ENCODE measurements at regions of chr13 and their contacts with region 1.

Region 1: DNA sequence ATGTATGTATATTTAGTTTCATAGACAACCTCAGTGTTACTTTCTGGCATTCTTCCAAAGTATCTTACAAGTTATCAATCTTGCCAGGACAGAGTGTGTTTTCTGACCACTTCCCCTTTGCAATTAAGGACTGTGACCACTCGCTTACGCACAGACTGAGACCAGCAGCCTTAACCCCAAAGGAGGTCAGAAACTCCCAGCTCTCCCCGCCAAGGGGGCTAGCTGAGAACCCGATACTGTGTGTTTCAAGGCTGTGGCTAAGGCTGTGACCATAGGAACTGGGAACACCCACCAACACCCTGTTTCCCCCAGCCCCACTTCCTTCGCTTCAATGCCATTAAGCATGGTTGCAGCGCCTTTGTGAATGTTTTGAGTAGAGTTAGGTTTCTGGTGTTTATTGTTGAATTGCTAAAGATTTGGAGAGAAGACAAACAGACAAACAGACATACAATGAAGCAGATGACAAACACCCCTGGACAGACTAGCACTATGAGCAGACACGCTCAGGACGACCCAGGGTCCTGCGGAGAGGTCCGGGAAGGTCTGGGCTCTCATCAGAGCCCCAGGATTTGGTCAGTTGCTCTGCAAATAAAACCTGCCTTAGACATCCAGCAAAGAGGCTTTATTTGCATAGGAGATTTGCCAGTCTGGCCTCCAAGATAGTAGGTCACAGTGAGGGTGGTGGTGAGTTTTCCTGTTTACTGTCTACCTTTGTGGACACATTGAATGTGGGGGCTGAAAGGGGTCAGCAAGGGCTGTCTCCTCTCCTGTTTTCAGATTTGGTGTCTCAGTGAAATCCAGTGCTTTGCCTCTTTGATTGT is 25.0 kb upstream of the TNFSF11 start:
- DNase-seq: peak; percentile 98
- ATAC-seq: peak; percentile 97
- H3K4me3 ChIP-seq: peak overlapping the region; percentile 33
- H3K27ac ChIP-seq: peak overlapping the region; percentile 66
- H3K4me1 ChIP-seq: peaks cover 27% of the 10 kb centered on the region
- H3K27me3 ChIP-seq: no peaks in the 10 kb centered on the region
- CTCF ChIP-seq: no peak
- EP300 ChIP-seq: peak; percentile 99
- POLR2A ChIP-seq: 0 out of 2 replicates have a peak, but pooled peaks have one; percentile 19
- RAD21 ChIP-seq: peak; percentile 35; the same call in 1 of the 2 replicates

Region 2: DNA sequence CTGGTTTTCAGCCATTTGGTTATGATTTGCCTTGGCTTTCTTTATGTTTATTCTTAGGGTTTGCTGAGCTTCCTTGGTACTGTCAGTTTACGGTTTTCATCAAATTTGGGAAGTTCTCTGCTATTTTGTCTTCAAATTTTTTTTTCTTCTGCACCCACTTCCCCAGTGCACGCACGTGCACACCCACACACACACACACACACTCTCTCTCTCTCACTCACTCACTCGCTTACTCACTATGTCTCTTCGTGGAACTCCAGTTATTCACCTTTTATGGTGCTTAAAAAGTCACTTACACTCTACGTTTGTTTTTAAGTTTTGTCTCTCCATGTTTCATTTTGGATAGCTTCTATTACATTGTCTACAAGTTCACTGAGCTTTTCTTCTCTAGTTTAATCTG is 269.9 kb before region 1 on chr13:
- CTCF ChIA-PET with region 1: no interaction called
- POLR2A ChIA-PET with region 1: no interaction called
- RAD21 ChIA-PET with region 1: no interaction called
- SMC1A ChIA-PET with region 1: no interaction called
- in situ Hi-C with region 1: no loop called
- intact Hi-C with region 1: no loop called
- DNase-seq: no peak
- ATAC-seq: peak; percentile 6; the same call in 1 of the 3 replicates
- H3K4me3 ChIP-seq: peak overlapping the region; percentile 46; the same call in 1 of the 2 replicates
- H3K27ac ChIP-seq: peak overlapping the region; percentile 54
- H3K4me1 ChIP-seq: peaks cover 26% of the 10 kb centered on the region
- H3K27me3 ChIP-seq: no peaks in the 10 kb centered on the region
- CTCF ChIP-seq: no peak
- EP300 ChIP-seq: no peak
- POLR2A ChIP-seq: no peak
- RAD21 ChIP-seq: no peak

Region 3: DNA sequence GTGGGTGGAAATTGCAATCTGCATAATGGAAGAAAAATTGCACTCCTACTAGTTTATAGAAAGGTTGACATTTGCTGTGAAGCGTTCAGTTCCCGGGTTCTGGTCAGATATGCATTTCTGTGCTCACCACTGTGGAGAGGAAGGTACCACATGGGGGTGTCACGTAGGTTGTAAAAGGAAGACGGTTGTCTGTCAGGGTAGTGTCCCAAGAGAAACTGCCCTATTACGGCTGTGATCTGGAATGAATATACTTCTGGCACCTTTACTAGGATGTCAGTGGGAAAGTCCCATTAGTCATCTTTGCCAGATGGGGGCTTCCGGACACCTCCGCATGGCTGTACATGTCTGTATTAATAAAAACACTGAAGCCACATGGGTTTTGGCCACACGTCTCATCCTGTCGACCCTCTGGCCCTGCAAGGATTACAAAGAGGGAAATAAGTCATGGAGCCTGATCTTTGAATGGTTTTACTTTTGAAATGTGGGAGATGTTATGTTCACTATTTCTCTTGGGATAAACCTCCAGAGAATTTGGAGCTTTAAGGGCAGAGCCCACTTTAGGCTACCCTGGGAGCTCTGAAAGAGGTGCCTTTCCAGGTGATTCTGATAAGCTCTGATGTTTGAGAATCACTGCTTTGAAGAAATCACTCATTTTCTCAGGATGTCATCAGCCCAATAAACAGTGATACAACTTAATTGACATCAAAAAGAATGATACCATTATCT is 143.1 kb before region 1 on chr13:
- CTCF ChIA-PET with region 1: interaction called, 3 read pairs
- POLR2A ChIA-PET with region 1: no interaction called
- RAD21 ChIA-PET with region 1: interaction called, 6 read pairs
- SMC1A ChIA-PET with region 1: interaction called, 3 read pairs
- in situ Hi-C with region 1: no loop called
- intact Hi-C with region 1: loop called (anchors 1 kb)
- DNase-seq: peak; percentile 97
- ATAC-seq: peak; percentile 90
- H3K4me3 ChIP-seq: peak overlapping the region; percentile 31; the same call in 1 of the 2 replicates
- H3K27ac ChIP-seq: peak overlapping the region; percentile 98
- H3K4me1 ChIP-seq: peaks cover 54% of the 10 kb centered on the region
- H3K27me3 ChIP-seq: no peaks in the 10 kb centered on the region
- CTCF ChIP-seq: 0 out of 6 replicates have a peak, but pooled peaks of 1 of the 3 experiments have one; percentile 5
- EP300 ChIP-seq: peak; percentile 86 to 97
- POLR2A ChIP-seq: peak; percentile 48; the same call in 1 of the 2 replicates
- RAD21 ChIP-seq: peak; percentile 45

Region 4: DNA sequence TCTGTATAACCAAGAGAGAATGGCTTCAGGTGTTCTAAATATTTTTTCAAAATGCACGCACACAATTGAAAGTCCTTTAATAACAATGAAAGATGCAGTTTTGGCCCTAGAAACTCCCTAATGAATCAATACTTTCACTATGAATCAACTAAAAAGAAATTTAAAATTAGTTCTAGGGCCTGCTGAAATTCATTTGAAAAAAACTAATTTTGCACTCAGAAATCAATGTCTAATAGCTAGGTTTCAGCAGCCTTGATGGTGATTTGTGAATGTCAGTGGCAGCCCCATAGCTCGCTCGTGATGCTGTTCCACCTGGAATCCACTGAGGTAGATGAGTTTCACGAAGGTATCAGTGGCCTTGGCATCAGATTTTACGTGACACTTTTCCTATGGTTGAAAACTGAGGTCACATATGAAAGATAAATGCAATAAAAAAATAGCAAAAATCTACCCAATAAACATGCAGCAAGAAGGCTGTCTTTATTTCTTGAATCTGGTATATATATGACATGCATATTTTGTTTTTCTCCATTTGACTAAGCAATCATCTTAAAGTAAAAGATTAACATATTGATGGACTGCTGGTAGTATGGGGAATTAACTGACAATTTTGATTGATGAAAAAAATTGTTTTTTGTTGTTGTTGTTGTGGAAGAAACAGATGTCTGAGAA is 136.0 kb before region 1 on chr13:
- CTCF ChIA-PET with region 1: no interaction called
- POLR2A ChIA-PET with region 1: no interaction called
- RAD21 ChIA-PET with region 1: no interaction called
- SMC1A ChIA-PET with region 1: interaction called, 3 read pairs
- in situ Hi-C with region 1: no loop called
- intact Hi-C with region 1: loop called (anchors 2 kb)
- DNase-seq: peak; percentile 72
- ATAC-seq: peak; percentile 83
- H3K4me3 ChIP-seq: no peak overlapping the region
- H3K27ac ChIP-seq: peak overlapping the region; percentile 96
- H3K4me1 ChIP-seq: peaks cover 46% of the 10 kb centered on the region
- H3K27me3 ChIP-seq: no peaks in the 10 kb centered on the region
- CTCF ChIP-seq: no peak
- EP300 ChIP-seq: peak; percentile 93
- POLR2A ChIP-seq: no peak
- RAD21 ChIP-seq: no peak

Region 5: GRCh38 chr13:42497798-42498197 is 51.1 kb before region 1 on chr13:
- CTCF ChIA-PET with region 1: no interaction called
- POLR2A ChIA-PET with region 1: no interaction called
- RAD21 ChIA-PET with region 1: interaction called, 3 read pairs
- SMC1A ChIA-PET with region 1: interaction called, 5 read pairs
- in situ Hi-C with region 1: no loop called
- intact Hi-C with region 1: loop called (anchors 1 kb)
- DNase-seq: peak; percentile 88
- ATAC-seq: peak; percentile 90
- H3K4me3 ChIP-seq: no peak overlapping the region
- H3K27ac ChIP-seq: peak overlapping the region; percentile 85
- H3K4me1 ChIP-seq: peaks cover 33% of the 10 kb centered on the region
- H3K27me3 ChIP-seq: no peaks in the 10 kb centered on the region
- CTCF ChIP-seq: no peak
- EP300 ChIP-seq: peak in 1 of 2 experiments; percentile 69; a peak in 1 of 4 replicates
- POLR2A ChIP-seq: no peak
- RAD21 ChIP-seq: peak; percentile 36; the same call in 1 of the 2 replicates

Region 6: DNA sequence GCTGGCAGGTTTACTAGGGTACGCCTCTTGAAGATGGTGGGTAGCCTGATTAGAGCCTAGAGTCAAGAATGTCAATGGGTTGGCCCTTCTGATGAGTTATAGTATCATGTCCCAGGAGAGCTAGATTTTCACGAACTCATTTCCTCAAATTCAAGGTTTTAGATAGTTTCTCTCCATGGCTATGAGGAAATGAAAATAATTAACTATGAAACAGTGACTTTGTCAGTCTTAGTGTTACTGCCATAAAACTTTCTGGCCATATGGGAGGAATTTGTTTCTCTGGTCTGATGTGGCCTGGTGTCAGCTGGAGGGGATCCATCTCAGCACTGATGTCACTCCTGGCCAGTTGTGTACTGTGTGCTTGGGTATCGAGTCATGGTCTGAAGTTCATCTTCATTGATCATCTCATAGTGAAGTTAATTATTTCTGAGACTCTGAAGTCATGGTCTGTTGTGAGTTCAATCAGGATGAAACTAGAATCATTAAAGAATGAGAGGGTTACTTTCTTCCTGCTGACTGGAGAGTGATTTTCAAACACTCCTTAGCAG is 24.4 kb before region 1 on chr13:
- CTCF ChIA-PET with region 1: no interaction called
- POLR2A ChIA-PET with region 1: interaction called, 3 read pairs
- RAD21 ChIA-PET with region 1: no interaction called
- SMC1A ChIA-PET with region 1: interaction called, 46 read pairs
- in situ Hi-C with region 1: no loop called
- intact Hi-C with region 1: loop called (anchors 2 kb)
- DNase-seq: peak; percentile 45
- ATAC-seq: peak; percentile 96
- H3K4me3 ChIP-seq: no peak overlapping the region
- H3K27ac ChIP-seq: peak overlapping the region; percentile 24; the same call in 1 of the 2 replicates
- H3K4me1 ChIP-seq: peaks cover 13% of the 10 kb centered on the region
- H3K27me3 ChIP-seq: no peaks in the 10 kb centered on the region
- CTCF ChIP-seq: no peak
- EP300 ChIP-seq: peak in 1 of 2 experiments; percentile 42; a peak in 1 of 4 replicates
- POLR2A ChIP-seq: no peak
- RAD21 ChIP-seq: no peak

Region 7: GRCh38 chr13:42532561-42533335 is 16.2 kb before region 1 on chr13:
- CTCF ChIA-PET with region 1: interaction called, 3 read pairs
- POLR2A ChIA-PET with region 1: interaction called, 3 read pairs
- RAD21 ChIA-PET with region 1: interaction called, 4 read pairs
- SMC1A ChIA-PET with region 1: interaction called, 46 read pairs
- in situ Hi-C with region 1: no loop called
- intact Hi-C with region 1: no loop called
- DNase-seq: peak; percentile 70
- ATAC-seq: peak; percentile 91
- H3K4me3 ChIP-seq: peak overlapping the region; percentile 35; the same call in 1 of the 2 replicates
- H3K27ac ChIP-seq: peak overlapping the region; percentile 49
- H3K4me1 ChIP-seq: peaks cover 16% of the 10 kb centered on the region
- H3K27me3 ChIP-seq: no peaks in the 10 kb centered on the region
- CTCF ChIP-seq: no peak
- EP300 ChIP-seq: peak; percentile 65 to 90; a peak in 3 of 4 replicates
- POLR2A ChIP-seq: no peak
- RAD21 ChIP-seq: no peak

Region 8: DNA sequence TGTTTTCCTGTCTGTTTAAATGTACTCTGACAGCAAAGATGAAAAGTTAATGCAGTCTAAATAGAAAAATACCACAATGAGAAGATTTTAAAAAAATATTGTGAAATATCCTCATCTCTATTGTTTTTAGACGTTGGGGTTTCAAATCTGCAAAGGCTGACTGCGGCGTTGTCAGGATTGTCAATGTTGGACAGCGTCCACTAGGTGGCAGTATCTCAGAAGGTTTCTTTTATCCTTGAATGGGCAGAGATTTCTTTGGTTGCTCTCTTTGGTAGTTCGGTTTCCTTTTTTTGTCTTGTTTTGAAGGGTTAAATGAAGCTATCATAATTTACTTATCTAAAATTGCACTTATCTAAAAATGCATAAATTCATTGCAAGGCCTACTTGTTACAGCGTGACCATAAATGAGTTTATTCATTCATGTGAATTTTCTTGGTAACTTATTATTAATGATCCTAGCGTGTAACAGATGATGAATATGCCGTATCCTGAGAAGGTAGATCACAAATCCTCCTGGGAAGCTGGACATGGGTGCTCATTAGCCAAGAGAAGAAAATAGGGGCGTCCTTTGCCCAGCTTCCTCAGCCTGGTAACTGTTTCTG is 46.1 kb after region 1 on chr13:
- CTCF ChIA-PET with region 1: interaction called, 3 read pairs
- POLR2A ChIA-PET with region 1: no interaction called
- RAD21 ChIA-PET with region 1: no interaction called
- SMC1A ChIA-PET with region 1: interaction called, 3 read pairs
- in situ Hi-C with region 1: no loop called
- intact Hi-C with region 1: loop called (anchors 1 kb)
- DNase-seq: peak; percentile 46
- ATAC-seq: peak; percentile 91
- H3K4me3 ChIP-seq: no peak overlapping the region
- H3K27ac ChIP-seq: no peak overlapping the region
- H3K4me1 ChIP-seq: no peaks in the 10 kb centered on the region; the same call in 1 of the 2 replicates
- H3K27me3 ChIP-seq: no peaks in the 10 kb centered on the region
- CTCF ChIP-seq: peak; percentile 60 to 86 (median 76)
- EP300 ChIP-seq: no peak
- POLR2A ChIP-seq: no peak
- RAD21 ChIP-seq: peak; percentile 95